Pancreas (tissue), 10 donors: ENCODE measurements at regions of chr15 and their contacts with region 1.

Region 1: GRCh38 chr15:62649793-62650420 is 392.6 kb upstream of the TPM1 start:
- DNase-seq: peak in 1 of 6 donors; percentile 41
- ATAC-seq: peak in 2 of 4 donors; percentile 52 to 65
- H3K4me3 ChIP-seq: no peak overlapping the region
- H3K27ac ChIP-seq: no peak overlapping the region
- H3K4me1 ChIP-seq: no peaks in the 10 kb centered on the region
- H3K27me3 ChIP-seq: no peaks in the 10 kb centered on the region
- CTCF ChIP-seq: no peak

Region 2: DNA sequence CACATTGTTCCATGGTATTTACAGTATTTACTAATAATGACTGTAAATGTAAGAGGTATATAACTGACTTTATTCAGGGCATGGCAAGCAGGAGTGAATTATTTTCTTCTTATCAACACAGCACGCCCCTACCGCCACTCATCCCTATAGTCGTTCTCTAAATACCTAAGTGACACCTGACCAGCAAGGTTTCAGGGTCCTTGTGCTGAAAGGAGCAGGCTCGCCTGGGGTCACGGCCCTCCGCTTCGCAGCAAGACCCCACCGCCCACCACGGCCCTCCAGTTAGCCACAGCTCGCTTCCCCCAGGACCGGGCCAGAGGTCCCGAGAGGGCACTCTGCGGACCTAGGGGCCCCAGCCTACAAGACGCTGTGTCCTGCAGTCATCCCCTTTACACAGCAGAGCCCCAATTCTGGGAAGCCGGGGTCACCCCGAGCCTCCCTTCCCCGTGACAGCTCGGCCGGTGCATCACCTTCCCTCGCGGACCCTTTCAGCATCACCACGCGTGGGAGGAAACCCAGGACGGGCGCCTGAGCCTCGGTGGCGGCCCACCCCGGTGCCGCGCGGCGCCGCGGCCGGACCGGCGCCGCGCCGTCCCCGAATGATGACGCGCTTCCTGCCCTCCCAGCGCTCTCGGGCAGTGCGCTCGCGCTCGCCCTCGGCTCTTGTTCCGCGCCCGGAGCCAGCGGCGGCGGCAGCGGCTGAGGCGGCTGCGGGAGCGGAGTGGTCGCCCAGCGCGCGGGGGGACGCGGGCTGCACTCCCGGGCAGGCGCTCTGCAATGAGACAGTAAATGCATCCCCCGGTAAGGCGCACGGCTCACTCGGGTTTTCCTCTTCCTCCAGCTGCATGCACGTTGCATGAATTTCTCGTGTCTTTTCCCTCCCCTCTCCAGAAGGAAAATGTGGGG is 259.8 kb before region 1 on chr15:
- intact Hi-C with region 1: loop called in 1 of 3 experiments (anchors 10 kb)
- DNase-seq: peak; percentile 62 to 89 (median 68)
- ATAC-seq: peak; percentile 78 to 92 (median 90)
- H3K4me3 ChIP-seq: peak within 1 kb of the TSS; percentile 71 to 91 (median 86)
- H3K27ac ChIP-seq: peak within 1 kb of the TSS; percentile 19 to 53 (median 48)
- H3K4me1 ChIP-seq: peaks cover 0 to 12% (median 7%) of the 10 kb centered on the region in 3 donors
- H3K27me3 ChIP-seq: no peaks in the 10 kb centered on the region
- CTCF ChIP-seq: no peak

Region 3: DNA sequence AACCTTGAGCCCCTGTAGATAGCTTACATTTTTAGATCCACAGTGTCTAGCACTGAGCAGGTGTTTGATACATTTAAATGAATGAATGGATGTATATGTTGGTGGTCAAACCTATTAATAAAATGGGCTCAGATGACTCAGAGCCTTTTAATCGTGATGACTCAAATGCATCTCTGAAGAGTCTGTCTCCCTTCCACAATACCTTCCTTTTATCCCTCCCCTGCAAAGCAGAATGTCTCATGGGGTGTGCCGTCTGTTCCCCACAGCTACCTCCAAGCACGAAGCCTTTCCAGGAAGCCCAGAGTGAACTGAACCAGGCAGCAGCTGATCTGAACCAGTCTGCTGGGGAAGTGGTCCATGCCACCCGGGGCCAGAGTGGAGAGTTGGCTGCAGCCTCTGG is 89.2 kb after region 1 on chr15:
- intact Hi-C with region 1: no loop called
- DNase-seq: no peak
- ATAC-seq: no peak
- H3K4me3 ChIP-seq: no peak overlapping the region
- H3K27ac ChIP-seq: no peak overlapping the region
- H3K4me1 ChIP-seq: no peaks in the 10 kb centered on the region
- H3K27me3 ChIP-seq: no peaks in the 10 kb centered on the region
- CTCF ChIP-seq: no peak